Endothelial cell of umbilical vein (primary cell): ENCODE measurements at regions of chr6 and their contacts with region 1.

Region 1: GRCh38 chr6:132858750-132859149 is 44.4 kb downstream of the RPS12 start:
- DNase-seq: no peak
- H3K4me3 ChIP-seq: no peak overlapping the region
- H3K27ac ChIP-seq: no peak overlapping the region
- H3K4me1 ChIP-seq: no peaks in the 10 kb centered on the region
- H3K27me3 ChIP-seq: peaks cover 0 to 1% of the 10 kb centered on the region in 2 experiments
- CTCF ChIP-seq: no peak
- POLR2A ChIP-seq: no peak

Region 2: DNA sequence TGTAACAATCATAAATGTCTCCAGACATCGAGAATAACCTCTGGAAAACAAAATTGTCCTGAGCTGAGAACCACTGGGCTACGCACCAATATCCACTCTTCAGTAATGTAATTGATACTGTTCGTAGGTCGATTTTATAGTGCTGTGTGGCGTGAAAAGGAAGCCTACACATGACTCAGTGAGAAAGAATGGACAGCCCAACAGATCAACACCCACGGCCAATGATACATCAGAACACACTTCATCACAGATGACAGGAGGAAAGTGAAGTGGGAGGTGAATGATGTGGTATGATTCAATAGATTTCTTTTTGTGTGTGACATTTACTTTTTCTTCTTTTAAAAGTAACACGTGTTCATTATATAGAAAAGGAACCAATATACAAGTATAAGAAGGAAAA is 49.2 kb after region 1 on chr6:
- CTCF ChIA-PET with region 1: no interaction called
- POLR2A ChIA-PET with region 1: no interaction called
- dilution Hi-C with region 1: no loop called
- intact Hi-C with region 1: loop called (anchors 1 kb)
- DNase-seq: no peak
- H3K4me3 ChIP-seq: no peak overlapping the region
- H3K27ac ChIP-seq: no peak overlapping the region
- H3K4me1 ChIP-seq: no peaks in the 10 kb centered on the region
- H3K27me3 ChIP-seq: no peaks in the 10 kb centered on the region
- CTCF ChIP-seq: no peak
- POLR2A ChIP-seq: no peak

Region 3: GRCh38 chr6:133326584-133326983 is 467.8 kb after region 1 on chr6:
- CTCF ChIA-PET with region 1: no interaction called
- POLR2A ChIA-PET with region 1: no interaction called
- dilution Hi-C with region 1: no loop called
- intact Hi-C with region 1: no loop called
- DNase-seq: no peak
- H3K4me3 ChIP-seq: no peak overlapping the region
- H3K27ac ChIP-seq: no peak overlapping the region
- H3K4me1 ChIP-seq: no peaks in the 10 kb centered on the region
- H3K27me3 ChIP-seq: no peaks in the 10 kb centered on the region
- CTCF ChIP-seq: no peak
- POLR2A ChIP-seq: no peak